Left cardiac atrium (tissue), 4 donors: ENCODE measurements at regions of chr12 and their contacts with region 1.

Region 1: GRCh38 chr12:10771132-10771733 is 31.2 kb downstream of the TAS2R7 start:
- DNase-seq: no peak
- ATAC-seq: peak; percentile 57 to 66

Region 2: GRCh38 chr12:10807186-10807585 is 36.0 kb after region 1 on chr12 and contains the start of gene TAS2R8:
- intact Hi-C with region 1: no loop called
- DNase-seq: no peak
- ATAC-seq: no peak
- total RNA-seq, gene TAS2R8: 0.26 TPM in 1 of 2 donors, not detected in the other

Region 3: DNA sequence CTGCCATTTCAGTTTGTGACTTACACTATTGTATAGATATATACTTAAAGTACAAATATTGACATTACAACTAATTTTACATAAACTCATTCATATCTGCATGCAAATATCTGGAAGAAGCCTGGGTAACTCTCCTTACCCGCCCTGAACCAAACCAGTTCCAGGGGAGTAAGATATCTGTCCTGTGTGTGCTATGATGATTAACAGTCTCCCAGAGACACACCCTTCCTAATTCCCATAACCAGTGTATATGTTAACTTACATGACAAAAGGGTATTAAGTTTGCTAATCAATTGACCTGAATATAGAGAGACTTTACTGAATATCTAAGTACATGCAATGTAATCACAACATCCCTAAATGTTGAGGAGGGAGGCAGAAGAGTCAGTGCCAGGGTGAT is 475.3 kb after region 1 on chr12:
- intact Hi-C with region 1: no loop called
- DNase-seq: no peak
- ATAC-seq: no peak

Region 4: GRCh38 chr12:11486623-11487444 is 715.6 kb after region 1 on chr12:
- intact Hi-C with region 1: loop called (anchors 2 to 5 kb)
- DNase-seq: peak; percentile 83
- ATAC-seq: peak; percentile 81 to 84